ENCODE measurements at regions of chr3 and their contacts with region 1.

Region 1: GRCh38 chr3:197809356-197810020 is 18.4 kb downstream of the LRCH3 start:
- DNase-seq: peak; percentile 84
- H3K4me3 ChIP-seq: no peak overlapping the region
- H3K27me3 ChIP-seq: no peaks in the 10 kb centered on the region
- CTCF ChIP-seq: no peak

Region 2: GRCh38 chr3:197775317-197775716 is 34.2 kb before region 1 on chr3:
- CTCF ChIA-PET with region 1: no interaction called
- POLR2A ChIA-PET with region 1: interaction called, 11 read pairs
- DNase-seq: no peak
- H3K4me3 ChIP-seq: no peak overlapping the region
- H3K27me3 ChIP-seq: no peaks in the 10 kb centered on the region
- CTCF ChIP-seq: no peak

Region 3: GRCh38 chr3:197878427-197878826 is 68.9 kb after region 1 on chr3:
- CTCF ChIA-PET with region 1: no interaction called
- POLR2A ChIA-PET with region 1: interaction called, 12 read pairs
- DNase-seq: no peak
- H3K4me3 ChIP-seq: no peak overlapping the region
- H3K27me3 ChIP-seq: no peaks in the 10 kb centered on the region
- CTCF ChIP-seq: no peak